ENCODE measurements at regions of chr1 and their contacts with region 1.

Region 1: GRCh38 chr1:158203693-158204457 is 23.2 kb downstream of the CD1D start:
- DNase-seq: peak; percentile 75
- ATAC-seq: peak; percentile 75
- H3K4me3 ChIP-seq: peak overlapping the region in 4 of 5 experiments; percentile 16 to 42 (median 30)
- H3K4me3 Mint-ChIP-seq: peak overlapping the region; percentile 74
- H3K27ac ChIP-seq: peak overlapping the region; percentile 4 to 72
- H3K27ac Mint-ChIP-seq: peak overlapping the region; percentile 70
- H3K4me1 ChIP-seq: peaks cover 11 to 14% of the 10 kb centered on the region in 2 donors
- H3K4me1 Mint-ChIP-seq: peaks cover 22% of the 10 kb centered on the region
- H3K27me3 ChIP-seq: no peaks in the 10 kb centered on the region
- H3K27me3 Mint-ChIP-seq: no peaks in the 10 kb centered on the region
- CTCF ChIP-seq: peak; percentile 95

Region 2: GRCh38 chr1:158149577-158150269 is 54.2 kb before region 1 on chr1:
- CTCF ChIA-PET with region 1: interaction called, 10 read pairs
- POLR2A ChIA-PET with region 1: no interaction called
- intact Hi-C with region 1: no loop called
- DNase-seq: peak; percentile 82
- ATAC-seq: peak; percentile 73
- H3K4me3 ChIP-seq: peak overlapping the region; percentile 53 to 81 (median 76)
- H3K4me3 Mint-ChIP-seq: peak overlapping the region; percentile 99
- H3K27ac ChIP-seq: peak overlapping the region; percentile 77 to 85
- H3K27ac Mint-ChIP-seq: peak overlapping the region; percentile 98
- H3K4me1 ChIP-seq: peaks cover 43 to 49% of the 10 kb centered on the region in 2 donors
- H3K4me1 Mint-ChIP-seq: peaks cover 58% of the 10 kb centered on the region
- H3K27me3 ChIP-seq: no peaks in the 10 kb centered on the region
- H3K27me3 Mint-ChIP-seq: no peaks in the 10 kb centered on the region
- CTCF ChIP-seq: no peak

Region 3: GRCh38 chr1:158185770-158186705 is 17.8 kb before region 1 on chr1:
- CTCF ChIA-PET with region 1: interaction called, 61 read pairs
- POLR2A ChIA-PET with region 1: interaction called, 5 read pairs
- intact Hi-C with region 1: no loop called
- DNase-seq: no peak
- ATAC-seq: no peak
- H3K4me3 ChIP-seq: no peak overlapping the region
- H3K4me3 Mint-ChIP-seq: no peak overlapping the region
- H3K27ac ChIP-seq: no peak overlapping the region
- H3K27ac Mint-ChIP-seq: peak overlapping the region; percentile 51
- H3K4me1 ChIP-seq: peaks cover 35 to 37% of the 10 kb centered on the region in 2 donors
- H3K4me1 Mint-ChIP-seq: peaks cover 53% of the 10 kb centered on the region
- H3K27me3 ChIP-seq: no peaks in the 10 kb centered on the region
- H3K27me3 Mint-ChIP-seq: no peaks in the 10 kb centered on the region
- CTCF ChIP-seq: no peak

Region 4: GRCh38 chr1:158257888-158258287 is 54.0 kb after region 1 on chr1:
- CTCF ChIA-PET with region 1: interaction called, 13 read pairs
- POLR2A ChIA-PET with region 1: no interaction called
- intact Hi-C with region 1: loop called (anchors 10 kb)
- DNase-seq: peak; percentile 17
- ATAC-seq: no peak
- H3K4me3 ChIP-seq: no peak overlapping the region
- H3K4me3 Mint-ChIP-seq: no peak overlapping the region
- H3K27ac ChIP-seq: peak overlapping the region in 1 of 2 donors; percentile 2
- H3K27ac Mint-ChIP-seq: no peak overlapping the region
- H3K4me1 ChIP-seq: peaks cover 17 to 22% of the 10 kb centered on the region in 2 donors
- H3K4me1 Mint-ChIP-seq: peaks cover 17% of the 10 kb centered on the region
- H3K27me3 ChIP-seq: no peaks in the 10 kb centered on the region
- H3K27me3 Mint-ChIP-seq: no peaks in the 10 kb centered on the region
- CTCF ChIP-seq: no peak

Region 5: DNA sequence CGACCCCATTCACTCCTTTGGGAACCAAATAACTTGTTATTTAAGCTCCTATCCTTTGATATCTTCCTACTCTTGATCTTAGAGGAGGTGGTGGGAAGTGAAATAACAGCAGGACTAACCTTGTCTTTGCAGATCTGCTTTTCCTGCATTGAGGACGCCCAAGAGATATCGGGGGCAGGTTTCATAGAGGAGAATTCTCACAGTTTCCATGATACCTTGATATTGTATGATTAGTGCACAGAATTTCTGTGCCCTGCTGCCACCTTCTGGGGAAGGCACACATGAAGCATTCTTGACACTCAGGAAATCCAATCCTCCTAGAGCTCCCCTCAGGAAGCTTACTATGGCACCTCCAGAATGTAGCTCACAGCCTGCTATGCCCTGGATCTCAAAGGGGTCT is 125.9 kb after region 1 on chr1:
- CTCF ChIA-PET with region 1: interaction called, 280 read pairs
- POLR2A ChIA-PET with region 1: interaction called, 6 read pairs
- intact Hi-C with region 1: loop called (anchors 1 kb)
- DNase-seq: peak; percentile 63
- ATAC-seq: no peak
- H3K4me3 ChIP-seq: no peak overlapping the region
- H3K4me3 Mint-ChIP-seq: no peak overlapping the region
- H3K27ac ChIP-seq: no peak overlapping the region
- H3K27ac Mint-ChIP-seq: no peak overlapping the region
- H3K4me1 ChIP-seq: peaks cover 43 to 55% of the 10 kb centered on the region in 2 donors
- H3K4me1 Mint-ChIP-seq: peaks cover 25% of the 10 kb centered on the region
- H3K27me3 ChIP-seq: no peaks in the 10 kb centered on the region
- H3K27me3 Mint-ChIP-seq: no peaks in the 10 kb centered on the region
- CTCF ChIP-seq: peak; percentile 42

Region 6: GRCh38 chr1:158998781-158999161 is 794.9 kb after region 1 on chr1:
- CTCF ChIA-PET with region 1: interaction called, 31 read pairs
- POLR2A ChIA-PET with region 1: no interaction called
- intact Hi-C with region 1: loop called (anchors 1 kb)
- DNase-seq: peak; percentile 80
- ATAC-seq: peak; percentile 73
- H3K4me3 ChIP-seq: no peak overlapping the region
- H3K4me3 Mint-ChIP-seq: peak overlapping the region; percentile 55
- H3K27ac ChIP-seq: no peak overlapping the region
- H3K27ac Mint-ChIP-seq: no peak overlapping the region
- H3K4me1 ChIP-seq: peaks cover 6 to 12% of the 10 kb centered on the region in 2 donors
- H3K4me1 Mint-ChIP-seq: peaks cover 22% of the 10 kb centered on the region
- H3K27me3 ChIP-seq: no peaks in the 10 kb centered on the region
- H3K27me3 Mint-ChIP-seq: no peaks in the 10 kb centered on the region
- CTCF ChIP-seq: peak; percentile 98

Measured in B cell (primary cell).